Head of caudate nucleus (tissue), 42 donors: ENCODE measurements at regions of chr3 and their contacts with region 1.

Region 1: GRCh38 chr3:24237971-24238767 is 256.5 kb downstream of the THRB start:
- DNase-seq: peak in 30 of 42 donors; percentile 21 to 84 (median 54)

Region 2: DNA sequence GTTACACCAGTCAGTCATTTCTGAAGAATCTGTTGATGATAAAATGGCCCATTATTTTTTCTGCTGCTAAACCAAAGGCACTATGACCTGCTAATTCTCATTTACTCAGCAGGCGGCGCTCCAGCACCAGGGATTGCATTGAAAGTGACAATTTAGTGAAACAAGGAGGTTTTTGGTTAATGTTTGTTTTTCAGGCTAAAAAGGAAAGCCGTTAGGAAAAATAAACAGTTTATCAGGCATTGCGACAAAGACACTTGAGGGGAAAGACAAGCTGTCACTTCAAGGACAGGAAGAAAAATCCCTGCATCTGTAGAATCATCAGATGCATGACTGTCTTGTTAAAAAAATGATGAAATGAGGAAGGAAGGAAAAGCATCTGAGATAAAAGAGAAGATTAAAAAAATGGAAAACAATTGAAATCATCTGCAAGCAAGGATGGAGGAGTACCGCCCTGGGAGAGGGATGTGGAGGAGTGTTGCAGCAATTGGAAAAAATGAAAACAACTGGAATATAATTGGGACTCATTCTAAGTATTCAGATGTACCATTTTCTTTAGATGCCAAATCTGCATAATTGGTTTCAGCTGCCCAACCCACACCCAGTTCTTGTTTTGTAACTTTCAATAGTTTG is 239.0 kb before region 1 on chr3:
- intact Hi-C with region 1: loop called (anchors 5 kb)
- DNase-seq: peak; percentile 41 to 95 (median 88)

Region 3: DNA sequence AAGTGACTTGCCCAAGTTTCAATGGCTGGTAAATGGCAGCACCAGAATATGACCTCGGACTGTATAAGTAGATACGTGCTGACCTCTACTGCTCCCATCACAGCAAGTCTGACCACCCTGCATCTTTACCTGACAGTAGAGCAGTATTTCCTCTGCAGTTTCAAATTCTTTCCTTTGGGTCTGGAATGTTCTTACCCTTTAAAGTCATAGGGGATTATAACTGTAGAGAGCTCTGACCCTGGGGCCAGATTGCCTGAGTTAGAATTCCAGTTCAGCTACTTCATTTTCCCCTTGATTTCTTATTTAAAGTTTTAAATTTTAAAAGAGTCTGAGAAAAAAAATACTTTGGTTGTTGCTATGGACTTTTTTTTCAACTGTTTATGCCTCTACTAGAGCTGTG is 55.4 kb before region 1 on chr3:
- intact Hi-C with region 1: loop called (anchors 5 kb)
- DNase-seq: no peak

Region 4: GRCh38 chr3:24945563-24945962 is 707.4 kb after region 1 on chr3:
- intact Hi-C with region 1: no loop called
- DNase-seq: peak in 11 of 42 donors; percentile 8 to 74 (median 34)